ENCODE measurements at regions of chr9 and their contacts with region 1.

Region 1: DNA sequence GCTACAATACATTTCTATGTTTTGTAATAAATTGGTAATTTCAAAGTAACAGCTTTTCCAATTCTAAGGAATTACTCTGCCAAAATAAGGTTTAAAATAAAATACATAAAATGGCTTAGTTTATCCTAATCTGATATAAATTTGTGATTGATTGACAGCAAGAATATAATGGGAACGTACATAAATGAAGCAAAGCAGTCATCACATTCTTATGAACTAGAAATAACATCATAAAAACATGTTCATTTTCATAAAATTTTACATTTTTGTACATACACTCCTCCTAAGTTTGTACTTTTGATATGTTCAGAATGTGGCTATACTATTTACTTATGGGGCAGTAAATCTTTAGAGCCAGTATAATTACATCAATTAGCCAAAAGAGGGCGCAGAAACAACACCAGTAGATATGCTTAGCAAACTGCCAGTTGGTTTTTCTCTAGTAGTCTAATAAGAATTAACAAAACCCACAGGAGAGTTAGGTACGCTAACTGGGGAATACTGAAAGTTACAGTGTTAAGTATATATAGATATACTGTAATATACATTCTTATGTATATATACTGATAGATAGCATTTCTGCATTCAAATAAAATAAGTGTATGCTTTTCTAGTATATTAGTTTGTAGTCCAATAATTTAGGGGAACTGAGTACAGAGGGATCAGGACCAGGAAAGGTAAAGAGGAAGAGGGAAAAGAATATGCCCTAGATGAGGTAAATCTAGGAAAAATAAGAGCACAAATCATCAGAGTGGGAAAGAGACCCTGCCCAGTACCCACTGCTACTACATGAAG is 76.8 kb downstream of the ZDHHC21 start:
- DNase-seq: no peak
- H3K4me3 ChIP-seq: no peak overlapping the region
- H3K27ac ChIP-seq: no peak overlapping the region
- H3K4me1 ChIP-seq: no peaks in the 10 kb centered on the region
- H3K27me3 ChIP-seq: no peaks in the 10 kb centered on the region
- CTCF ChIP-seq: peak in 2 of 3 experiments; percentile 30
- POLR2A ChIP-seq: no peak

Region 2: DNA sequence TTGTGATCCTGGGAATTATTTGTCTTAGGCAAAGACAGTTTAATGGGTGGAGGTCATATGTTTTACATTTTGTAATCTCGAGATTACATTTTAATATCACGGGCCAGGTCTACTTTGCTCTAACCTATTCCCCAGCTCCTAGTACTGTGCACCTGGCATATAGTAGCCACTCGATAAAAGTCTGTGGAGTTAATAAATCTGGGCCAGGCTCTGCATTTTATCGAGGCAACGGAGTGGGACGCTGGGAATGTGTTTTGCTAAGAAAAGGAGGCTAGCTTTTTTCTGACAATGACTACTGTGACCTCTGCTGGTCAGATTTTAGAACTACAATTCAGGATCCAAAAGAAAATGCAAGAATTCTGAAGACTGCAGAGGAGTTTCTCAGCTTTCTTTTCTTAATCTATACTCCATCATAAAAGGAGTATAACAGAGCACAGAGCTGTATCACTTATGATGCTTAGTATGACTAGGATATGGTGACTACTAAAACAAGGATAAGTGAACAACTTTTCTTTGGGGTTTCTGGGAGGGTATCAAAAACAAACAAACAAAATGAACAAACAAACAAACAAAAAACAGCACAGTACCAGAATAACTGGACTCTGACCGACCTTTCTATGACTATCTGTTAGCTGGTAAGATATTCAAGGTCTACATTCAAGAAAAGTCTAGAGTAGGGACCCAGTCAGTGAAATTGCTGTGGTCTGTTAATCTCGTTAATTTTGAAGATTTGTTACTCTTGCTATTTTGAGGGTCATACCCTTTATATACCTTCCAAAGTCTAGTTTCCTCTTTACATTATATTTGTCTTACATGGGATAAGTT is 152.2 kb after region 1 on chr9:
- intact Hi-C with region 1: loop called (anchors 10 kb)
- DNase-seq: no peak
- H3K4me3 ChIP-seq: no peak overlapping the region
- H3K27ac ChIP-seq: no peak overlapping the region
- H3K4me1 ChIP-seq: no peaks in the 10 kb centered on the region
- H3K27me3 ChIP-seq: no peaks in the 10 kb centered on the region
- CTCF ChIP-seq: peak; percentile 51 to 65 (median 56)
- POLR2A ChIP-seq: no peak

Region 3: DNA sequence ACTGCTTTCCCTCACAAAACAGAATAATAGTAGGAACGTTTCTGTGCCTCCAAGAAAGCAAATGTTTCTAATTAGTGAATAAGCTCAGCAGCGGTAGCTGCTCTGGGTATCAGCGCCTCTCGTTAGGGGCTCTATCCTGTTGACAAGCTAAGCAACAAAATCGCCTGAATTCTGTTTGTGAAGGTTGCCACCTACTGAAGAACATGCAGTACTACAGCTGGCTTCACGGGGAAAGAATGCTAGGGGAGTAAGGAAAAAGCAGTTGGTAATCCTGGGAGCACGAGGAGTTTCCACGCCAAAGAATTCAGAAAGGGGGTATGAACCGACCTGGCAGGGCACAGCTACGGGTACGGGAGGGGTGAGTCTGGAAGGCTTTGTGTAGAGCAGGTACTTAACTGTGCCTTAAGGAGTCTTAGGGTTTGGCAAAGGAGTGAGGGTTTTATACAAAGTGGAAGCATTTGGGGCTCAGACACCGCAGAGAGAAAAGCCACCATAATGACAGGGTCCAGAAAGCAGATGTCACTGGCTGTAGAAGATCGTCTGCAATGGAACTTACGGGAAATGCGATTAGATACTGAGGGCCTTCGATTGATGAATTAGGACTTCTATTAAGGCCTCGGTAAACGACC is 518.9 kb after region 1 on chr9:
- intact Hi-C with region 1: loop called (anchors 10 kb)
- DNase-seq: no peak
- H3K4me3 ChIP-seq: peak overlapping the region in 1 of 2 donors; percentile 10
- H3K27ac ChIP-seq: no peak overlapping the region
- H3K4me1 ChIP-seq: no peaks in the 10 kb centered on the region
- H3K27me3 ChIP-seq: no peaks in the 10 kb centered on the region
- CTCF ChIP-seq: peak; percentile 54 to 92 (median 76)
- POLR2A ChIP-seq: no peak